ENCODE measurements at regions of chr6 and their contacts with region 1.

Region 1: DNA sequence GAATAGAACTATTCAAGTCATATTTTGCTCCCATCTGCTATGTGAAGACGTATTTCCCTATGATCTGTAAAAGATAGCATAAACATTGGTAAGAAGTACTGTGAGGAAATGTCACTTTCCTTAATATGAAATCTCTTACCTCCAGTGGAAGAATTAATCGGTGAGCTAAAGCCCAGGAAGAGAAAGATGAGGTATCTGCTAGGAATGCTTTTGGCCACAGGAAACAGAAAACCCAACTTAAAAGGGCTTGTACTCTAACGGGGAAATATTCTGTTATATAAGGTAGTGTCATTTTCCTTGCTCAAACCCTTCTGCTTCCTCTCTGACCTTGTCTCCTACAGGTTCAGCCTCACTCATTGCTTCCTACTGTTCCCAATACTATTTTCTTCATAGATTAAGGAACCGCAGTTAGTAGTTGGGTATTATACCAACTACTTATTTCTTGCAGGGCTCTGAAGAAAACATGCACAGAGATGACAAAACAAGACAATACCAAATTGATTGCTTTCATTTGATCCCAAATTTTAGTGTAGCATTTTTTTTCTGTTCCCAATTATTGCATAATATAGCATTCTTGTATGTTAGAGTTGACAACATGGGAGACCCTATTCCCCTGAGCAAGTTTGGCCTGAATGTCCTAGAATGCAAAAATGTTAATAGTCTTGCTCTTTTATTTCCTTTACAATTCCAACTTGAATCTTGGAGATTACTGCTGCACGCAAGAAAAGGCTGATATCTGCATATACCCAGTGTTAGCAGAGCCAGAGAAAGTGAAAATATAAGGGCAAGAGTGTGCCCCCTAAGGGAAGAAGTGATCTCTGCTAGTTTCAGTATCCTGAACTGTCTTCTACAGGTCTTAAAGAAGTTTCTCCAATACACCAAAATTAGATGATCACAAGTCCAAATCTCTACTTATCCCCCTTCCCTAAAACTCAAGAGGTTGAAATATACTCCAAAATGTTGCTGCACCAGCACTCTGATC is 65.3 kb downstream of the AFG1L start:
- DNase-seq: no peak
- ATAC-seq: no peak
- H3K4me3 ChIP-seq: no peak overlapping the region
- H3K27ac ChIP-seq: no peak overlapping the region
- H3K4me1 ChIP-seq: peaks cover 0 to 8% (median 0%) of the 10 kb centered on the region in 9 donors
- H3K27me3 ChIP-seq: no peaks in the 10 kb centered on the region
- CTCF ChIP-seq: peak in 1 of 9 donors; percentile 9

Region 2: GRCh38 chr6:108168501-108169463 is 191.4 kb before region 1 on chr6:
- intact Hi-C with region 1: no loop called
- DNase-seq: peak in 1 of 2 donors; percentile 18
- ATAC-seq: peak; percentile 48 to 79 (median 68)
- H3K4me3 ChIP-seq: peak overlapping the region in 9 of 10 donors; percentile 14 to 35 (median 33)
- H3K27ac ChIP-seq: no peak overlapping the region
- H3K4me1 ChIP-seq: peaks cover 13 to 67% (median 54%) of the 10 kb centered on the region in 9 donors
- H3K27me3 ChIP-seq: peaks cover 56 to 100% (median 100%) of the 10 kb centered on the region in 7 donors
- CTCF ChIP-seq: peak in 7 of 9 donors; percentile 12 to 54 (median 45)

Region 3: DNA sequence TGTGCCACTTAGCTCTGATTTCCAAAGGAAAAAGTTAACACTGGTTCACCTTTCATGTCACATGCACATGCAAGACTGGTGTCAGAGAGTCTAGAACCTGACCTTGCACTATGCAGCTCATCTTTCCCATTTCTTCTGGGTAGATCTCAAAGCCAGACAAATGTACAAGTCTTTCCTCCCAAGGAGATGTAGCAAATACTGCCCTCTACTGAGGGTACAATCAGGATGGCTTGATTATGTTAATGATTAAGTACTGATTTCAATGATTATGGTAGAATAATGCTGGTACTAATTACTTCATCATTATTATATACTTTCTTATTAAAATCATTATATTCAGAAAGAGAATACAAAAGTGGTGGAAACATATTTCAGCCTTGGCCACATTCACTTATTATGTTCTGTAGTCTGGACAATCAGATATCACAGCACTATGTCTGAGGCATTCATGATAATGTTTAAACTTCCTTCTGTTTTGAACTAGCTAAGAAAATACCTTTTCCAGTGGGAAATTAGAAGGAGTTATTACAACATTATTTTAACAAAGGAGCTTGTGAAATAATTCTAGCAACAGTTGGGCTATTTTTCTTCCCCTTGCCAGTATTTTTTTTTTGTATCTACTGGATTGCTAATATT is 132.1 kb after region 1 on chr6:
- intact Hi-C with region 1: loop called in 1 of 10 experiments (anchors 5 kb)
- DNase-seq: peak in 1 of 2 donors; percentile 6
- ATAC-seq: peak in 3 of 8 donors; percentile 35 to 72 (median 67)
- H3K4me3 ChIP-seq: no peak overlapping the region
- H3K27ac ChIP-seq: no peak overlapping the region
- H3K4me1 ChIP-seq: peaks cover 0 to 7% (median 0%) of the 10 kb centered on the region in 9 donors
- H3K27me3 ChIP-seq: no peaks in the 10 kb centered on the region
- CTCF ChIP-seq: peak; percentile 20 to 85 (median 66)